Thyroid gland (tissue), 4 donors: ENCODE measurements at regions of chr12 and their contacts with region 1.

Region 1: DNA sequence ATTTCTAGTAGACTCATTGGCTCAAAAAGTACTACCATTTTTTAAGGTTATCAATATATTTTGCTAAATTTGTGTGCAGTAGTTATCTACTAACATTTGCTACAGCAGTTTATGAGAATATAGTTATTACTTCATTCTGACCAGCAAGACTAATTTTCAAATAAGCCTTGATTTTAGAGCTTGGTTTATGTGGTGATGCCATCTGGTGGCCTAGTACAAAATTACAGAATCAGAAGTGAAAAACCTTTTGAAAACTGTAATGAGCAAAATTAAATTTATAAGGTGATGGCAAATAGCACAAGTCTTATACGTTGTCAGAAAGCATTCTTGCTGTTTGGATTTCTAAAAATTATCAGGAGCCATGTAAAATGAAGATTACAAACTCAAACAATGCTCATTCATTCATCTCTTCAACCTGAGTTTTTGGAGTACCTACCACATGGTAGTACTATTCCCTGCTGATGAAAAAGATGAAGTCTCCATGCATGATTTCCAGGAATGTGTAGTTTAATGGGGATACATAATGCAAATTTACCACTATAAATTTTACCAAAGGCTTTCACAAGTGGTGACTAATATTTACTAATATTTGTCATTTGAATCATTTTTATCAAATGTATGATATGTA is 51.0 kb downstream of the MAGOHB start:
- DNase-seq: no peak
- H3K4me3 ChIP-seq: no peak overlapping the region
- H3K27ac ChIP-seq: no peak overlapping the region
- H3K4me1 ChIP-seq: no peaks in the 10 kb centered on the region
- H3K27me3 ChIP-seq: no peaks in the 10 kb centered on the region
- CTCF ChIP-seq: peak in 5 of 6 experiments; percentile 32 to 75 (median 65)
- POLR2A ChIP-seq: no peak

Region 2: GRCh38 chr12:10235761-10236631 is 326.4 kb before region 1 on chr12:
- intact Hi-C with region 1: loop called (anchors 5 kb)
- DNase-seq: peak; percentile 14 to 35
- H3K4me3 ChIP-seq: no peak overlapping the region
- H3K27ac ChIP-seq: no peak overlapping the region
- H3K4me1 ChIP-seq: no peaks in the 10 kb centered on the region
- H3K27me3 ChIP-seq: no peaks in the 10 kb centered on the region
- CTCF ChIP-seq: peak; percentile 68 to 88 (median 79)
- POLR2A ChIP-seq: no peak

Region 3: GRCh38 chr12:10320643-10321042 is 241.8 kb before region 1 on chr12:
- intact Hi-C with region 1: loop called (anchors 10 kb)
- DNase-seq: no peak
- H3K4me3 ChIP-seq: no peak overlapping the region
- H3K27ac ChIP-seq: no peak overlapping the region
- H3K4me1 ChIP-seq: no peaks in the 10 kb centered on the region
- H3K27me3 ChIP-seq: no peaks in the 10 kb centered on the region
- CTCF ChIP-seq: no peak
- POLR2A ChIP-seq: no peak

Region 4: DNA sequence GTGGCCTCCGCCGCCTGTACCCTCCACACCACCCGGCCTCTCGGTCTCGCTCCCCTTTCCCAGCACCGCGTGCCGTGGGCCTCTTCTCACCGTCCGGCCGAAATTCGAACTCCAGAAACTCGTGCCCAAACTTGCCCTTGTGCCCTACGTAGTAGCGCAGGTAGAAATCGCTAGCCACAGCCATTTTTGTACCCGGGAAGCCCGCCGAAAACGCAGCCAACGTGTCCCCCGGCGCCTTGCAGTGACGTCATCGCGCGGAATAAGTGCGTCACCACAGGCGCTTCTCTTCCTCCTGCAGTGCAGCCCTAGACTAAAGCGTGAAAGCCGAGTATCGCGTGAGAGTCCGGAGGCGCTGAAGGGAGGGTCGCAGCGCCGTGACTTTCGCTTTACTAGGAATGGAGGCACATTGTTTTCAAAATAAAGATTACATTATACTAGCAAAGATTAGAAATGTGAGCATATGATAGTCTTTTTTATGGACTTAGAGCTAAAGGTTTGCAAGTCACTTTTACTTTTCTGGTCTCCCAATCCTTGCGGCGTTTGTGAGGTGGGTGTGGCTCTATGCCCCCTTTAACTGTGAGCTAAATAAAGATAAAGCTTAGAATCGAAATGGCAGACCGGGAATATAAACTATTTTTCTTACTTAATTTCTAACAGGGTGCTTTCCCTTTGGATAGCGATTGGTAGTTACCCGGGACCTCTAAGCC is 51.1 kb after region 1 on chr12 and contains the start of gene MAGOHB:
- intact Hi-C with region 1: no loop called
- DNase-seq: peak; percentile 94 to 96
- H3K4me3 ChIP-seq: peak within 1 kb of the TSS; percentile 17 to 50 (median 47)
- H3K27ac ChIP-seq: peak within 1 kb of the TSS; percentile 69 to 77 (median 75)
- H3K4me1 ChIP-seq: peaks cover 0 to 8% of the 10 kb centered on the region in 2 donors
- H3K27me3 ChIP-seq: no peaks in the 10 kb centered on the region
- CTCF ChIP-seq: peak in 1 of 6 experiments; percentile 33
- POLR2A ChIP-seq: peak in 1 of 2 donors; percentile 81
- total RNA-seq, gene MAGOHB: 13.1 to 17.4 (median 14.5) TPM